PC-9 (cell line): ENCODE measurements at regions of chr10 and their contacts with region 1.

Region 1: GRCh38 chr10:91251430-91252056 is 31.1 kb downstream of the PCGF5 start:
- DNase-seq: peak in 1 of 2 experiments; percentile 17
- H3K4me3 ChIP-seq: no peak overlapping the region
- H3K27ac ChIP-seq: no peak overlapping the region
- H3K4me1 ChIP-seq: no peaks in the 10 kb centered on the region
- H3K27me3 ChIP-seq: no peaks in the 10 kb centered on the region
- CTCF ChIP-seq: peak; percentile 84

Region 2: DNA sequence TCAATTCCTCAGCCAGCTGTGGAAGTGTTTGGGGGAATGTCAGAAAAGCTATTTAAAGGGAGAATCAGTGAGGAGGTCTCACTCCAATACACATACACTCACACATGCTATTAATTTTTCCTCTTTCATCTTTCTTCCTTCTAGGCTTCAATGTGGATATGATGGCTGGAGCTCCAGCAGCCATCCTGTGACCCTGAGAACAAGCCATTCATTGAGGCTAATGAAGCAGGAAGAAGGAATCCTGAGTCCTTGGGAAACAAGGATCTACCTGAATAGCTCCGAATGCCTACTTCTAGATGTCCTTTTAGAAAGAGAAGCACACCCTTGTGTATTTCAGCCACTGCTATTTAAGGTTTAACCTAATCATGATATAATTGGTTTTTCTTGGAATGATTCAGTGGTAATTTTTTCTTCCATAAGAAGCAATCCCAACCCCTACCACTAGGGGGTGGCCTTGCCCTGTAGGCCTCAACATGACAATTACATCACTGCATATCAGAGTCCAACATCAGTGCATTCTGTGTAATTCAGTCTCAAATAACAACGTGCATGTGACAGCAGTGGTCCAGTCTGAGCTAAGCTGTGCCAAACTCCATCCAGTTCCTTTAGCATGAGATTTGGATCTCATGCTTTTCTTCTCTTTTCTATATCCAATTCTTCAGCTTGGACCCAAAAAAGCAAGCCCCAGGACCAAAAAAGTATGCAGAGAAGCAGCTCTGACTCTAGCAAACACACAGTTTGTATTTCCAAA is 245.4 kb before region 1 on chr10:
- CTCF ChIA-PET with region 1: interaction called, 5 read pairs
- POLR2A ChIA-PET with region 1: no interaction called
- intact Hi-C with region 1: loop called (anchors 1 kb)
- DNase-seq: peak; percentile 35 to 46
- H3K4me3 ChIP-seq: no peak overlapping the region
- H3K27ac ChIP-seq: no peak overlapping the region
- H3K4me1 ChIP-seq: no peaks in the 10 kb centered on the region
- H3K27me3 ChIP-seq: no peaks in the 10 kb centered on the region
- CTCF ChIP-seq: peak; percentile 88

Region 3: GRCh38 chr10:91043173-91043910 is 208.2 kb before region 1 on chr10:
- CTCF ChIA-PET with region 1: no interaction called
- POLR2A ChIA-PET with region 1: no interaction called
- intact Hi-C with region 1: loop called (anchors 2 kb)
- DNase-seq: peak in 1 of 2 experiments; percentile 2
- H3K4me3 ChIP-seq: no peak overlapping the region
- H3K27ac ChIP-seq: no peak overlapping the region
- H3K4me1 ChIP-seq: no peaks in the 10 kb centered on the region
- H3K27me3 ChIP-seq: no peaks in the 10 kb centered on the region
- CTCF ChIP-seq: peak; percentile 52